GM12878 (cell line): ENCODE measurements at regions of chr5 and their contacts with region 1.

Region 1: GRCh38 chr5:151447174-151448037 is at the start of gene SLC36A1:
- DNase-seq: peak; percentile 68
- ATAC-seq: peak; percentile 89
- H3K4me3 ChIP-seq: peak within 1 kb of the TSS; percentile 87
- H3K27ac ChIP-seq: no peak within 1 kb of the TSS
- H3K4me1 ChIP-seq: peaks cover 12% of the 10 kb centered on the region
- H3K27me3 ChIP-seq: no peaks in the 10 kb centered on the region
- CTCF ChIP-seq: peak; percentile 84 to 97 (median 93); a peak in 4 of 6 replicates
- EP300 ChIP-seq: peak in 1 of 2 experiments; percentile 22; a peak in 1 of 4 replicates
- POLR2A ChIP-seq: peak; percentile 86
- RAD21 ChIP-seq: peak; percentile 94
- polyA plus RNA-seq, gene SLC36A1: 0.50 to 0.66 TPM

Region 2: DNA sequence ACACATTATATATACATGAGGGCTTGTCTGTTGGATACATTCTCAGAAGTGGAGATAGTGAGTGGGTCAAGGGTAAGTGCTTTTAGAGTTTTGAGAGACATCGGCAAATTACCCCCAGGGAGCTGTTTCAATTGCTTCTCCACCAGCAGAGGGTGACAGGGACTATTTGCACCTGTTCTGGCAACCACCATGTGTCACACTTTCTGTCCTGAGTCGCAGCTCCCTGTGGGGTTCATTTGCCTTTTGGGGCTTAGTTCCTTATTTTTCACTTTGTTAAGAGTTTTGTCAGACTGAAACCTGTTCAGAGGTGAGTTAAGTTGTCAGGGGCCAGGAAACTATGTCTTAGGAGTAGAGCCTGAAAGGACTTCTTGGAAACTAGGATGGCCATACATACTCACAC is 20.1 kb before region 1 on chr5:
- CTCF ChIA-PET with region 1: interaction called, 13 read pairs
- POLR2A ChIA-PET with region 1: interaction called, 3 read pairs
- RAD21 ChIA-PET with region 1: interaction called, 12 read pairs
- SMC1A ChIA-PET with region 1: interaction called, 10 read pairs
- in situ Hi-C with region 1: no loop called
- intact Hi-C with region 1: no loop called
- DNase-seq: peak; percentile 66
- ATAC-seq: peak; percentile 98
- H3K4me3 ChIP-seq: no peak overlapping the region
- H3K27ac ChIP-seq: no peak overlapping the region
- H3K4me1 ChIP-seq: peaks cover 5% of the 10 kb centered on the region
- H3K27me3 ChIP-seq: no peaks in the 10 kb centered on the region
- CTCF ChIP-seq: peak; percentile 41 to 56 (median 45); a peak in 5 of 6 replicates
- EP300 ChIP-seq: peak in 1 of 2 experiments; percentile 49; a peak in 1 of 4 replicates
- POLR2A ChIP-seq: no peak
- RAD21 ChIP-seq: peak; percentile 44; the same call in 1 of the 2 replicates

Region 3: DNA sequence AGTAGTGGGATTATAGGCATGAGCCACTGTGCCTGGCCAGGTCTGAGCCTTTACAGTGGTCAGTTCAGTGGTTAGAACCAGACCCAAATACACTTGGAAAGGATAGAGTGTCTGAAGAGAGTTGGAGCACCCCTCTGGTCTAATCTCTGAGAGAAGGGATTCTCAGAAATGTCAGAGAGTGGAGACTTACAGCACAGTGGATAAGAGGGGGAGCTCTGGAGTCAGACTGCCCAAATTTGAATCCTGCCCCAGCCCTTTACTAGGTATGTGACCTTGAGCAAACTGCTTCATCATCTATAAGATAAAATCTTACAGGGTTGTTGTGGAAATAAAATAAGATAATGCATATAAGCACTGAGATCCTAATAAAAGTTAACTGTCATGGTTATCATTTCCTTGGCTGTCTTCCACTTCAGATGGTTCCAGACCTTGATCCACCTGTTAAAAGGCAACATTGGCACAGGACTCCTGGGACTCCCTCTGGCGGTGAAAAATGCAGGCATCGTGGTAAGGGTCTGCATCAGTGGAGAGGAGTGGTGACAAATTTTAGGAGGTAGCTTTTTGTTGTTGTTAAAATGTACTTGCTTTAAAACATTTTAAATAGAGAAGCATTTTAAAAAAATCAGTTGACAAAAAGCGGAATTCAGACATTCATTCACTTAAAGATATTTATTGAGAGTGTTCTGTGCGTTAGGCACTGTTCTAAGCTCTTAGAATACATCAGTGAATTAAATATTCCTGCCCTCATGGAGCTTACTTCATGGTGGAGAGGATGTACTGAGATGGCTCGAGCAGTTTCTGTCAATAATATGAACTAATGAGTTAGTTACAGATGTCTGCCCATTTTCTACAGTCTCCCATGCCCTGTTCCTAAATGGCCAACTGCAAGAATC is 16.0 kb after region 1 on chr5:
- CTCF ChIA-PET with region 1: interaction called, 43 read pairs
- POLR2A ChIA-PET with region 1: no interaction called
- RAD21 ChIA-PET with region 1: interaction called, 13 read pairs
- SMC1A ChIA-PET with region 1: interaction called, 17 read pairs
- in situ Hi-C with region 1: no loop called
- intact Hi-C with region 1: no loop called
- DNase-seq: no peak
- ATAC-seq: no peak
- H3K4me3 ChIP-seq: no peak overlapping the region
- H3K27ac ChIP-seq: no peak overlapping the region
- H3K4me1 ChIP-seq: peaks cover 9% of the 10 kb centered on the region; the same call in 1 of the 2 replicates
- H3K27me3 ChIP-seq: no peaks in the 10 kb centered on the region
- CTCF ChIP-seq: peak; percentile 25 to 39 (median 29); a peak in 4 of 6 replicates
- EP300 ChIP-seq: no peak
- POLR2A ChIP-seq: no peak
- RAD21 ChIP-seq: peak; percentile 25

Region 4: GRCh38 chr5:151499501-151500035 is 52.2 kb after region 1 on chr5:
- CTCF ChIA-PET with region 1: interaction called, 31 read pairs
- POLR2A ChIA-PET with region 1: no interaction called
- RAD21 ChIA-PET with region 1: interaction called, 20 read pairs
- SMC1A ChIA-PET with region 1: interaction called, 53 read pairs
- in situ Hi-C with region 1: loop called (anchors 5 kb)
- intact Hi-C with region 1: loop called (anchors 1 kb)
- DNase-seq: no peak
- ATAC-seq: no peak
- H3K4me3 ChIP-seq: no peak overlapping the region
- H3K27ac ChIP-seq: no peak overlapping the region
- H3K4me1 ChIP-seq: peaks cover 5% of the 10 kb centered on the region; the same call in 1 of the 2 replicates
- H3K27me3 ChIP-seq: no peaks in the 10 kb centered on the region
- CTCF ChIP-seq: no peak
- EP300 ChIP-seq: no peak
- POLR2A ChIP-seq: no peak
- RAD21 ChIP-seq: no peak

Region 5: GRCh38 chr5:151523335-151523734 is 75.9 kb after region 1 on chr5:
- CTCF ChIA-PET with region 1: interaction called, 47 read pairs
- POLR2A ChIA-PET with region 1: interaction called, 3 read pairs
- RAD21 ChIA-PET with region 1: interaction called, 22 read pairs
- SMC1A ChIA-PET with region 1: interaction called, 21 read pairs
- in situ Hi-C with region 1: no loop called
- intact Hi-C with region 1: loop called (anchors 1 kb)
- DNase-seq: no peak
- ATAC-seq: peak; percentile 97
- H3K4me3 ChIP-seq: no peak overlapping the region
- H3K27ac ChIP-seq: no peak overlapping the region
- H3K4me1 ChIP-seq: no peaks in the 10 kb centered on the region
- H3K27me3 ChIP-seq: peaks cover 0 to 1% of the 10 kb centered on the region in 2 experiments; a peak in 2 of 4 replicates
- CTCF ChIP-seq: peak; percentile 64 to 71 (median 68); a peak in 5 of 6 replicates
- EP300 ChIP-seq: no peak
- POLR2A ChIP-seq: no peak
- RAD21 ChIP-seq: peak; percentile 77